RWPE1 (cell line): ENCODE measurements at regions of chr3 and their contacts with region 1.

Region 1: GRCh38 chr3:89198591-89198990 is 91.2 kb downstream of the EPHA3 start:
- DNase-seq: no peak
- H3K27ac ChIP-seq: no peak overlapping the region
- CTCF ChIP-seq: no peak

Region 2: DNA sequence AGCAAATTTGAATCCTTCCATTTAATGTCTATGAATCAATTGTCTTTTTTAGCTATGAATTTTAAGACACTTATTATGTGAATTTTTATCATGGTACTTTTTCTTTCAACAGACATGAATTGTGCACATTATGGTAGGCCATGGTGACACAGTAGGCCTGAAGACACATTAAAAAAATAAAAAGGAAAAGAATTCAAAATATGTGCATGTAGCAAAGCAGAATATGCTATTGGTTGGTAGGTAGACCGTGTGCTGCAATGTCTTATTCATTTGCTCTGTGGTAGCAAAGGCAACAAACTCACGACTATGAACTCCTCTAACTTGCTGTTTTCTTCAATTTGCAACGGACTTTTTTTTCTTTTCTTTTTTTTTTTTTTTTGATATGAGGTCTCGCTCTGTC is 141.2 kb before region 1 on chr3:
- CTCF ChIA-PET with region 1: interaction called, 11 read pairs
- POLR2A ChIA-PET with region 1: no interaction called
- DNase-seq: no peak
- H3K27ac ChIP-seq: no peak overlapping the region
- CTCF ChIP-seq: no peak

Region 3: GRCh38 chr3:89165636-89166263 is 32.8 kb before region 1 on chr3:
- CTCF ChIA-PET with region 1: no interaction called
- POLR2A ChIA-PET with region 1: no interaction called
- DNase-seq: no peak
- H3K27ac ChIP-seq: no peak overlapping the region
- CTCF ChIP-seq: no peak

Region 4: DNA sequence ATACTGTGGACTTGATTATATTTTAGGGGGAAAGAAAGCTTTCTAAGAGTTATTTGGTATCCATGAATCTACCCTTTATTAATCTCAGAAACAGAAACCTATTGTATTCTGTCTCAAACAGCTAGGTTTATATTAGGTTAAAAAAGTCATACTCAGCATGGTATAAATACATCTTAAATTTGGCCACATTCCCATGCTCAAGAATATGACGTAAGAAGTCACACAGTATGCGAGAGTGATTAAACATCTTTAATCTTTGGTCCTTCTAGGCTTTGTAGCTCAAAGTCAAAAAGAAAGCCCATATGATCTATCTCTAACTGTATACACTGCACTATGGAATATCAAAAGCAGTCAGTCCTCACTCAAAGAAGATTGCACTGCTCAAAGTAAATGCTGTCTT is 40.3 kb after region 1 on chr3:
- CTCF ChIA-PET with region 1: no interaction called
- POLR2A ChIA-PET with region 1: no interaction called
- DNase-seq: no peak
- H3K27ac ChIP-seq: no peak overlapping the region
- CTCF ChIP-seq: no peak

Region 5: DNA sequence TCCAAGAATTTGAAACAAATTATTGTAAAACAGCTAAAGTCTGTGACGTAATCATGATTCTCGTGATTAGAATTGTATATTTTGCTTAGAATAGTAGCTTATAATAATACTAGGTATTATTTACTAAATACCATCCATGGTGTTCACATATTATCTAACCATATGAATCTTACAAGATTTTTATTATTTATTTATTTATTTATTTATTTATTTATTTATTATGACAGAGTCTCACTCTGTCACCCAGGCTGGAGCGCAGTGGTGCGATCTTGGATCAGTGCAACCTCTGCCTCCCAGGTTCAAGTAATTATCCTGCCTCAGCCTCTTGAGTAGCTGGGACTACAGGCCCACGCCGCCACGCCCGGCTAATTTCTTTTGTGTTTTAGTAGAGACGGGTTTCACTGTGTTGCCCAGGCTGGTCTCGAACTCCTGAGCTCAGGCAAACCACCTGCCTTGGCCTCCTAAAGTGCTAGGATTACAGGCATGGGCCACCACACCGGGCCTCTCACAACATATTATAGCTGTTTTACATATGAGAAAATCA is 82.3 kb after region 1 on chr3:
- CTCF ChIA-PET with region 1: no interaction called
- POLR2A ChIA-PET with region 1: no interaction called
- DNase-seq: no peak
- H3K27ac ChIP-seq: no peak overlapping the region
- CTCF ChIP-seq: no peak